ENCODE measurements at regions of chr11 and their contacts with region 1.

Region 1: GRCh38 chr11:119474682-119475596 is 52.0 kb upstream of the THY1 start:
- DNase-seq: peak; percentile 42 to 97 (median 81)

Region 2: DNA sequence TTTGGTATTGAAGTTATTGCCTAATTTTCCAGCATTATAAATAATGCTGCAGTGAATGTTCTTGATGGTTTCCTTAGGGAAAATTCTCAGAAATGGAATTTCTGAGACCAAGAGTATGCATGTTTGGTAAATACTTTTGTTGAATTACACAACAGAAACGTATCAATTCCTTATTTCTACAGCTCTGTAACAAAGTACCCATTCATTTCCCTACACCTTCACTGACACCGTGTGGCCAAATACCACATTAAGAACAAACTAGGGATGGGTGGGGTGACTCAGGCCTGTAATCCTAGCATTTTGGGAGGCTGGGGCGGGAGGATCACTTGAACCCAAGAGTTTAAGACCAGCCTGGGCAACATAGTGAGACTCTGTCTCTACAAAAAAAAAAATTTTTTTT is 179.8 kb before region 1 on chr11:
- intact Hi-C with region 1: no loop called
- DNase-seq: no peak

Region 3: DNA sequence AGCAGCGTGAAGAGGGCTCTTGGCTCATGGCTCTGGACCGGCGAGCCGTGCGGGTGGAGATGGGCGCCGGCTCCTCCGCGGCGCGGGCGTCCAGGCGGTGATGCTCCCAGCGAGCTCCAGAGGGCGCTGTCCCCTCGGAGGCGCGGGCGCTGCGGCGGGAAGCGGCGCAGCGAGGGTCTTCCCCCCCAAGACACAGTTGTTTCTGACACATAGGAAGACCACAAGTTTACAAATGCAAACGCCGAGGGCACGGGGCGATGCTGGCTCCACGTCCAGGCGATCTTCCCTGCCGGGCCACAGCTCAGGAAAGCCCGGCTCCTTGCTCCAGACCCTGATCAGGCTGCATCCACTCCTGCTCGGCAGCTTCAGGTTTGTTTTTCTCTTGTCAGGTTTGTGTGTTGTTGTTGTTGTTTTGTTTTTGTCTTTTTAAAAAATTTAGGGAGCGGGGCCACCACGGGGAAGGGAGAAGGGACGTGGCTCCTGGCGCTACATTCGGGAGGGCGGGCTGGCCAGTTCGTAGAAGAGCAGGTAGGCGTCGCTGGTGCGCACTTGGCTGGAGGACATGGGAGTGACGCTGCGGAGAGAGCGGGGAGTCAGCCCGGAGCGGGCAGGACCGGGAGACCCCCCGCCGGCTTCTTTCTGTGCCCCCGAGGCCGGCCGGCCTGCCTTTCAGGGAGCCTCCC is 118.4 kb before region 1 on chr11:
- intact Hi-C with region 1: loop called (anchors 2 kb)
- DNase-seq: peak in 8 of 10 donors; percentile 70 to 96 (median 79)

Region 4: DNA sequence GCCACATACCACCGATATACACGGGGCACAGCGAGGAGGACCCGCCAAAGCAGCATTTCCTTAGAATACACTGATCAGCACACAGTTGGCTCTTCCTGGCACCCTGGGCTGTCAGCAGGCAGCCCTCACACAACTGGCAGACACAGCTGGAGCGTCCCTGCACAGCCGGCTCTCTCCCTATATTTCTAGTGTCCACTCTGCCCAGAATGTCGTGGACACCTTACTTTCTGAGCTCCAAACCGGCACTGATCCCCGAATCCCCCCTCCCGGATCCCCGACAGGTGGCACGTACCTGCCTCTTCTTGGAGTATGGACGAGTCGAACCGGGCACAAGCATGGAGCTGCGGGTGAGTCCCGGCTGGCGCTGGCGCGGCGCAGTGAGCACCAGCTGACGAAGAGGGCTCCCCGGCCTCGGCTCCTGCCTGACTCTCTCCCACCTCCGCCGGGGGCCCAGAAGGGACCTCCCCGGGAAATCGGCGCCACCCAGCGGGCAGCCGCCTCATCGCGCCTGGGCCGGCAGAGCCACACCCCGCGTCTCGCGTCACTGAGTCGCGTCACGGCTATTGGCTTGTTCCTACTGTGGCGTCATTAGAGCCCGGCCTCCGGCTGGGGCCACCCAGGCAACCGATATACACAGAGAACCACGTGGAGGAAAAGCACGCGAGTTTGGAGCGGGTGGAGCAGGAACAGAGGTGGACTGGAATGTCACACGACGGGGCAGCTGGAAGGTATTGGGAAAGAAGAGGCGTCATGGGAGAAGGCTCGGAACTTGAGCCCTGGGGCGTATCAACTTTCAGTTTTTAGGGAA is 93.6 kb before region 1 on chr11 and contains the start of gene USP2:
- intact Hi-C with region 1: loop called (anchors 2 kb)
- DNase-seq: peak; percentile 95 to 100 (median 99)

Region 5: GRCh38 chr11:119421941-119422808 is 52.8 kb before region 1 on chr11:
- intact Hi-C with region 1: loop called (anchors 5 kb)
- DNase-seq: peak; percentile 47 to 92 (median 60)

Measured in posterior cingulate gyrus (tissue), 11 donors.